Sigmoid colon (tissue), 7 donors: ENCODE measurements at regions of chr6 and their contacts with region 1.

Region 1: GRCh38 chr6:31971993-31972708 is at the start of gene DXO:
- DNase-seq: peak; percentile 99
- H3K4me3 ChIP-seq: peak within 1 kb of the TSS; percentile 50 to 81 (median 65)
- H3K27ac ChIP-seq: peak within 1 kb of the TSS; percentile 93 to 96 (median 94)
- H3K4me1 ChIP-seq: peaks cover 0 to 36% (median 29%) of the 10 kb centered on the region in 4 donors
- H3K27me3 ChIP-seq: no peaks in the 10 kb centered on the region
- CTCF ChIP-seq: no peak
- EP300 ChIP-seq: peak in 2 of 4 donors; percentile 47 to 55
- POLR2A ChIP-seq: peak in 1 of 2 donors; percentile 35
- total RNA-seq, gene DXO: 11.4 to 22.7 (median 18.3) TPM

Region 2: DNA sequence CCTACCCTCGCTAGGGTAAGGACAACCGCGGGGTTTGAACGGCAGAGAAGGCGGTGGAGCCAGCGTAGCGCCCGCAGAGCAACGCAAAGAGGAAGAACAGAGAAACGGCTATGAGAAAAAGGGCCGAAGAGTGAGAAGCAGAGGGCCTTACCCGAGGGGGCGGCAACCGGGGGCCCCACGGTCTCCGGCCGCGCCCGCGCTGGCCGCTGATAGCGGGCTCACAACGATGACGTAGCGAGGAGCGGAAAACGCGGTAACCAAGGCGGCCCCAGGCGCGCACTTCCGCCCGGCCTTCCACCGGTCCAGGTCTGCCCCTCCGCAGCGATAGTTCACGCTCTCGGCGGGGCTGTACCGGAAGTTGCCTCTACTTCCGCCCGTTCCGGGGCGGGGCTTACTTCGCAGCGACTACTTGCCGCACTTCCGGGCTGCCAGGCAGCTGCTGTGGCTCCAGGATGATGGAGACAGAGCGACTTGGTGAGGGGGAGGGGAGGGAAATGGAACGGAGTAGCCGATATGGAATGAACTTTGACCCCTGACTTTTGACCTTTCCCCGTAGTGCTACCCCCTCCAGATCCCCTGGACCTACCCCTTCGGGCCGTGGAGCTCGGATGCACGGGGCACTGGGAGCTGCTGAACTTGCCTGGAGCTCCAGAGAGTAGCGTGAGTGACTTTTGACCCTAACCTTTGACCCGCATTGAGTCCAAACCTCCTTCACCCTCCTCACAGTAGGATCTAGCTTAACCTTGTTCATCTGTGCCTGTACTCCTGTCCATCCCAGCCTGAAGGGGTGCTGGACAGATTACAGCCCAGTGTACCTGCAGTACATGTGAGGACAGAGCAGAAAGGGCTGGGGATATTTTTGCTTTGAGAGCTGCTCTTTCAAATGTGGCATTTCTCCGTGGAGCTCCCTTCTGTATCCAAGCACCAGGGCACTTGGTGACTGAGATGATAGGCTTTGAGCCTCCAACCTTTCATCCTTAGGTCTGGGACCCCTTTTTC is 13.1 kb before region 1 on chr6 and contains the starts of genes NELFE and SKIC2:
- intact Hi-C with region 1: loop called (anchors 1 kb)
- DNase-seq: peak; percentile 99
- H3K4me3 ChIP-seq: peak within 1 kb of the TSS; percentile 65 to 92 (median 83)
- H3K27ac ChIP-seq: peak within 1 kb of the TSS; percentile 77 to 91 (median 88)
- H3K4me1 ChIP-seq: peaks cover 0 to 25% (median 22%) of the 10 kb centered on the region in 4 donors
- H3K27me3 ChIP-seq: no peaks in the 10 kb centered on the region
- CTCF ChIP-seq: no peak
- EP300 ChIP-seq: peak in 1 of 4 donors; percentile 48
- POLR2A ChIP-seq: peak; percentile 46 to 52
- total RNA-seq, gene NELFE: 60.1 to 96.9 (median 75.8) TPM
- total RNA-seq, gene SKIC2: 22.1 to 73.4 (median 33.4) TPM

Region 3: GRCh38 chr6:32153564-32154513 is 181.7 kb after region 1 on chr6 and contains the start of gene PPT2:
- intact Hi-C with region 1: no loop called
- DNase-seq: peak; percentile 98
- H3K4me3 ChIP-seq: peak within 1 kb of the TSS; percentile 61 to 80 (median 78)
- H3K27ac ChIP-seq: peak within 1 kb of the TSS; percentile 88 to 93 (median 92)
- H3K4me1 ChIP-seq: peaks cover 0 to 59% (median 49%) of the 10 kb centered on the region in 4 donors
- H3K27me3 ChIP-seq: no peaks in the 10 kb centered on the region
- CTCF ChIP-seq: peak in 2 of 4 experiments; percentile 13 to 19
- EP300 ChIP-seq: peak in 2 of 4 donors; percentile 2 to 91
- POLR2A ChIP-seq: peak in 1 of 2 donors; percentile 47
- total RNA-seq, gene PPT2: 15.5 to 126 (median 62.7) TPM